ENCODE measurements at regions of chr1 and their contacts with region 1.

Region 1: DNA sequence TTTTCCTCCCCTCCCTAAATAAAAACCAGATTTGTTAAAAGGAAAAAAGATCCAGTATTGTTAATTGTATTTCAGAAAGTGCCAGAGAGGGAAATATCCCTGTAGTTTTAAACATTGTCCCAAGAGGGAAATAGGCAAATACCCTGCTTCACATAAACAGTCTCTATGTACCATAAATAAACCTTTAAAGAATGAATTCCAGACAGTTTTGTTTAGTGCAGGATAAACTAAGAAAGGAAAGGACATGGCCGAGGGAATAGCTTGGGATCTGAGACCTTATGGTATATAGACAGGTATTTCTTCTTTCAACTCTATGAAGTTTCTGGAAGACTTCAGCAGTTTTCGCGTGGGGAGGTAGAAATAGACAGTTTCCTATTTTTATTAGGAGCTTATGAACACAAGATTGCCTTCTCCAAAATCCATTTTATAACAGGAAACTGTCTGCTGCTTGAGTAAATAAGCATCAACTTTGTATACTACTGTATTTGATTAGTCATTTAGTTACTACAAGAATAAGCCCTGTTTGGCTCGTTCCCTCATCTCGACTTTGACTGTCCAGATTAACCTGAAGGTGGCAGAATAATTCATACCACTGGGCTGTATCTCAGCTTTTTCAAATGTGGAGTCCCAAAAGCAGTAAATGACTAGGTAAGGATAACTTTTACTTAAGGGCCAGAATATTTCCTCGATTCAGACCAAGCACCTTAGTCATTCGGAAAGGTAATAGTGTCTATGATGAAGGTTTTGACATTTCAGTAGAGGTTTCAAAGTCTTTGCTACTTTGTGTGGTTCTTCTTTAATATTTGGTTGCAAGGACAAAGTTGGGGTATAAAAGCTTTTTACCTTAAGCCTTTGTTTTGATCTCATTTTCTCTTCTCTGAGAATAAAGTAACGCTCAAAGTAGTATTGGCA is 177.5 kb downstream of the VPS13D start:
- DNase-seq: peak; percentile 50
- H3K4me3 ChIP-seq: no peak overlapping the region
- H3K27ac ChIP-seq: peak overlapping the region; percentile 54
- H3K4me1 ChIP-seq: peaks cover 17% of the 10 kb centered on the region
- H3K27me3 ChIP-seq: no peaks in the 10 kb centered on the region
- CTCF ChIP-seq: no peak

Region 2: GRCh38 chr1:12477936-12478611 is 70.8 kb after region 1 on chr1:
- intact Hi-C with region 1: loop called (anchors 5 kb)
- DNase-seq: peak; percentile 93
- H3K4me3 ChIP-seq: no peak overlapping the region
- H3K27ac ChIP-seq: peak overlapping the region; percentile 91
- H3K4me1 ChIP-seq: peaks cover 58% of the 10 kb centered on the region
- H3K27me3 ChIP-seq: no peaks in the 10 kb centered on the region
- CTCF ChIP-seq: no peak

Region 3: DNA sequence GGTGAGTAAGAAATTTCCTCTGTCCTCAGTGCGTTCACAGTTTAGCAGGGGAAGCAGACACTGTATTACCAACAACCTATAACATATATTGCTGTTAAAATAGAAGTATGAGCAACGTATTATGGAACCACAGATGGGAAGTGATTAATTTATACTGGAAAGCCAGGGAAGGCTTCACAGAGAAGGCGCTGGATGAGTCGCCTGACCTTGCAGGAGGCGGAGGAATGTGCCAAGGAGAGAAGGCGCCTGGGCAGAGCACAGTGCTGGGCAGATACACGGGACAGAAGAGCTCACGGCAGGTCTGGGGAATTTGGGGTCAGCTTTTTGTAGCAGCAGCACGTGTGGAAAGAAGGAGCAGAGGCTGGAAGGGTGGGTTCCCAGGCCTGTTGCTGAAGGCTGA is 94.4 kb after region 1 on chr1:
- intact Hi-C with region 1: no loop called
- DNase-seq: no peak
- H3K4me3 ChIP-seq: no peak overlapping the region
- H3K27ac ChIP-seq: no peak overlapping the region
- H3K4me1 ChIP-seq: no peaks in the 10 kb centered on the region
- H3K27me3 ChIP-seq: no peaks in the 10 kb centered on the region
- CTCF ChIP-seq: no peak

Region 4: GRCh38 chr1:12596007-12596821 is 188.9 kb after region 1 on chr1:
- intact Hi-C with region 1: loop called (anchors 5 kb)
- DNase-seq: peak; percentile 56
- H3K4me3 ChIP-seq: peak overlapping the region; percentile 25
- H3K27ac ChIP-seq: peak overlapping the region; percentile 83
- H3K4me1 ChIP-seq: peaks cover 19% of the 10 kb centered on the region
- H3K27me3 ChIP-seq: no peaks in the 10 kb centered on the region
- CTCF ChIP-seq: no peak